GM12878 (cell line): ENCODE measurements at regions of chr12 and their contacts with region 1.

Region 1: GRCh38 chr12:779745-780734 is 27.7 kb downstream of the WNK1 start:
- DNase-seq: no peak
- ATAC-seq: peak; percentile 50
- H3K4me3 ChIP-seq: peak overlapping the region; percentile 50
- H3K27ac ChIP-seq: peak overlapping the region; percentile 46
- H3K4me1 ChIP-seq: peaks cover 22% of the 10 kb centered on the region
- H3K27me3 ChIP-seq: no peaks in the 10 kb centered on the region
- CTCF ChIP-seq: no peak
- EP300 ChIP-seq: no peak
- POLR2A ChIP-seq: no peak
- RAD21 ChIP-seq: no peak

Region 2: DNA sequence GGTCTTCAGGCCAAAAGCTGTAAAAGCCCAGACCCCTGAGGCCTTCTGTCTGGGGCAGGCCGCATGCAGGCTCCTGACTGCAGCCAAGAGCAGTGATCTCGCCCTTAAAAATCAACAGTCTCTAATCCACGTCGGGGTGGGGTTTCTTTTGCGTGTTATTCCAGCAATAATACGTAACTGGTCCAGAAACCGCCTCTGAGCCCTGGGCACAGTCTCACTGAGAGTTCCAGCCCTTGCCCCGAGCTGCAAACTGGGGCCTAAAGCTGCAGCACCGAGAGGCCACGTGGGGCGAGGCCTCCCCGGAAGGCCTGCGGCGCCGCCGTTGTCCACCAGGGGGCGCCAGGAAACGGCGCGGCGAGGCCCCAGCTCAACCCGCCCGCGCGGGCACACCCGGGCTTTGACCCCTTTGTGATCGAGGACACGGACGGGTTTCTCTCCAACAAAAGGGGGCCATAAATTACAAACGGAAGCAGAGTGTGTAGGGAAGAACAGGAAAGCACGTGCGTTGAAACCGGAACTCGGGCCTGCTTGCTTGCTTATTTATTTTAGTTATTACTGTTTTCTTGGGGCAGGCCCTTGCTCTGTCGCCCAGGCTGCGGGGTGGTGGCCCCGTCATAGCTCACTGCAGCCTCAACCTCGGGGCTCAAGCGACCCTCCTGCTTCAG is 204.0 kb before region 1 on chr12:
- CTCF ChIA-PET with region 1: interaction called, 12 read pairs
- POLR2A ChIA-PET with region 1: no interaction called
- RAD21 ChIA-PET with region 1: interaction called, 9 read pairs
- SMC1A ChIA-PET with region 1: interaction called, 3 read pairs
- in situ Hi-C with region 1: no loop called
- intact Hi-C with region 1: no loop called
- DNase-seq: peak; percentile 40
- ATAC-seq: peak; percentile 99
- H3K4me3 ChIP-seq: no peak overlapping the region
- H3K27ac ChIP-seq: peak overlapping the region; percentile 26
- H3K4me1 ChIP-seq: peaks cover 10% of the 10 kb centered on the region
- H3K27me3 ChIP-seq: no peaks in the 10 kb centered on the region
- CTCF ChIP-seq: peak; percentile 90 to 99 (median 96)
- EP300 ChIP-seq: no peak
- POLR2A ChIP-seq: peak; percentile 59
- RAD21 ChIP-seq: peak; percentile 79

Region 3: DNA sequence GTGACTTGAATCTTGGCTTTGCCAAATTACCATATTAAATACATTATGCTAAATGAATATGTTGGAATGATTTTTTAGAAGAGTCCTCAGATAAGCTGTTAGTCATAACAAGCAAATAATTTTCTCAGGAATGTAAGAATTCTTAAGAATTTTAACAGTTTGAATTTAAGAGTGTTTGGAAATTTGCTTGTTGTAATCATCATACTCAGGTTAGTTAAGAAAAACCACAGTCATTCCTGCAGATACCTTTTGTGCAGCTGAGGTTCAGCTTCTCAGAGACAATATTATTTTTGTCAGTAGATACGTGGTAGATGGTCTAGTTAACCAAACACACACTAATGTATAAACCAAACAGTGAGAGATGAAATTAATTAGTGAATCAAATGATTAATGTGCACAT is 18.8 kb before region 1 on chr12:
- CTCF ChIA-PET with region 1: interaction called, 11 read pairs
- POLR2A ChIA-PET with region 1: interaction called, 13 read pairs
- RAD21 ChIA-PET with region 1: interaction called, 29 read pairs
- SMC1A ChIA-PET with region 1: interaction called, 42 read pairs
- in situ Hi-C with region 1: no loop called
- intact Hi-C with region 1: no loop called
- DNase-seq: no peak
- ATAC-seq: no peak
- H3K4me3 ChIP-seq: peak overlapping the region; percentile 28
- H3K27ac ChIP-seq: no peak overlapping the region
- H3K4me1 ChIP-seq: no peaks in the 10 kb centered on the region; the same call in 1 of the 2 replicates
- H3K27me3 ChIP-seq: no peaks in the 10 kb centered on the region
- CTCF ChIP-seq: no peak
- EP300 ChIP-seq: no peak
- POLR2A ChIP-seq: no peak
- RAD21 ChIP-seq: no peak

Region 4: GRCh38 chr12:795305-795704 is 15.3 kb after region 1 on chr12:
- CTCF ChIA-PET with region 1: interaction called, 10 read pairs
- POLR2A ChIA-PET with region 1: interaction called, 9 read pairs
- RAD21 ChIA-PET with region 1: interaction called, 4 read pairs
- SMC1A ChIA-PET with region 1: interaction called, 26 read pairs
- in situ Hi-C with region 1: no loop called
- intact Hi-C with region 1: no loop called
- DNase-seq: no peak
- ATAC-seq: peak; percentile 86
- H3K4me3 ChIP-seq: 0 out of 2 replicates have a peak overlapping the region, but pooled peaks have one; percentile 5
- H3K27ac ChIP-seq: peak overlapping the region; percentile 57
- H3K4me1 ChIP-seq: peaks cover 13% of the 10 kb centered on the region
- H3K27me3 ChIP-seq: no peaks in the 10 kb centered on the region
- CTCF ChIP-seq: no peak
- EP300 ChIP-seq: no peak
- POLR2A ChIP-seq: no peak
- RAD21 ChIP-seq: no peak

Region 5: DNA sequence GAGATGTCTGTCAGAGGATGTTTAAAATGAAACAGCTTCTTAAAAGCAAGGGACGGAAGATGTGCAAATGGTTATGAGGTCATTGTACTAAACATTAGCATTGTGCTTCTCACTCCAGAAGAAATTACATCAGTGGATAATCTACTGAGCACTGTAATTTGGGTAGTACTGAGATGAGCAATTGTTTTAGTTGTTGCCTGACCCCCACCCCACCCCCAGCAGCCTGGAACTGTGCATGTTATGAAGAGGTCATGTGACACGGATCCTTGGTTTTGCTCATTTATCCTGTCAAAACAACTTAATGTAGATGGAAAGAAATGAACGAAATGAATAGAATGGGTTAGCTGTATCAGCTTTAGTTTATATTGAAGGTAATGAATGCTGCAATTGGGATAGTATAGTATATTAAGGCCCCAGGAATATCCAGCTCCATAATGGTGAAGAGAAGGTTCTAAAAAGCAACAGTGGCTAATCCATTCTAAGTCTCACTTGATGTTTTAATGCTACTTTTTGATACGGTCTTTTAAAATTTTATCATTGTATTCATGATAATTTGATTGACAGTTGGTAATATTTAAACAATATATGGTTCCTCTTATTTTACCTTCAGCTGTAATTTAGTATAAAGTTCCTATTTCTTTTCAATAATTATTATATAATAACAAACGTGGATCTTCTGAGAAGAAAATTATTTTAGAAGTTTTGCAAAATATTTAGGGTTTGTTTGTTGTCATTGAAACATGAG is 30.8 kb after region 1 on chr12:
- CTCF ChIA-PET with region 1: interaction called, 16 read pairs
- POLR2A ChIA-PET with region 1: interaction called, 4 read pairs
- RAD21 ChIA-PET with region 1: interaction called, 4 read pairs
- SMC1A ChIA-PET with region 1: interaction called, 9 read pairs
- in situ Hi-C with region 1: no loop called
- intact Hi-C with region 1: no loop called
- DNase-seq: no peak
- ATAC-seq: peak; percentile 78
- H3K4me3 ChIP-seq: peak overlapping the region; percentile 5; the same call in 1 of the 2 replicates
- H3K27ac ChIP-seq: peak overlapping the region; percentile 9; the same call in 1 of the 2 replicates
- H3K4me1 ChIP-seq: peaks cover 49% of the 10 kb centered on the region
- H3K27me3 ChIP-seq: no peaks in the 10 kb centered on the region
- CTCF ChIP-seq: no peak
- EP300 ChIP-seq: peak; percentile 61 to 70; a peak in 2 of 4 replicates
- POLR2A ChIP-seq: no peak
- RAD21 ChIP-seq: no peak